GM12878 (cell line): ENCODE measurements at regions of chr2 and their contacts with region 1.

Region 1: DNA sequence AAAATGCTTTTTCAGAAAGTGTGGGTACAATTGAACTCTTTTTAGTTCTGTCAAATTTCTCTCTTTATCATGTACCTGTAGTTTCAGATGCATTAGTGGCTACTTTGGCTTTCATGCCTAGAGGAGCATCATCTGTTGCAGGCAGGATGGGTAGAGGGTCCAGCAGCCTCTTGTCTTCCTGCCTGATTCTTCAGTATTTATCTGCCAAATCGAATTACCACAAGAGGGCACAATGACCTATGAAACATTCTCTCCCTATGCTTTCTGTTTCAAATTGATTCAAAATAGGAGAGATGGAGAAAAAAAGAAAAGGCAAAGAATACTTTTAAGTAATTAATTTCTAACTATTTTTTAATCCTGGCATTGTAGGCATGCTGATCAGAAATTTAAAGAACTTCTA is 477.2 kb downstream of the TRIB2 start:
- DNase-seq: peak; percentile 31
- ATAC-seq: peak; percentile 92
- H3K4me3 ChIP-seq: no peak overlapping the region
- H3K27ac ChIP-seq: no peak overlapping the region
- H3K4me1 ChIP-seq: no peaks in the 10 kb centered on the region
- H3K27me3 ChIP-seq: no peaks in the 10 kb centered on the region
- CTCF ChIP-seq: peak; percentile 42 to 68 (median 56); a peak in 5 of 6 replicates
- EP300 ChIP-seq: no peak
- POLR2A ChIP-seq: no peak
- RAD21 ChIP-seq: peak; percentile 83

Region 2: GRCh38 chr2:13056259-13056843 is 137.5 kb before region 1 on chr2:
- CTCF ChIA-PET with region 1: interaction called, 3 read pairs
- POLR2A ChIA-PET with region 1: no interaction called
- RAD21 ChIA-PET with region 1: no interaction called
- SMC1A ChIA-PET with region 1: no interaction called
- in situ Hi-C with region 1: no loop called
- intact Hi-C with region 1: loop called (anchors 5 kb)
- DNase-seq: no peak
- ATAC-seq: peak; percentile 41; the same call in 2 of the 3 replicates
- H3K4me3 ChIP-seq: no peak overlapping the region
- H3K27ac ChIP-seq: no peak overlapping the region
- H3K4me1 ChIP-seq: no peaks in the 10 kb centered on the region
- H3K27me3 ChIP-seq: no peaks in the 10 kb centered on the region
- CTCF ChIP-seq: peak; percentile 17 to 46 (median 25); a peak in 3 of 6 replicates
- EP300 ChIP-seq: no peak
- POLR2A ChIP-seq: no peak
- RAD21 ChIP-seq: 0 out of 2 replicates have a peak, but pooled peaks have one; percentile 19

Region 3: DNA sequence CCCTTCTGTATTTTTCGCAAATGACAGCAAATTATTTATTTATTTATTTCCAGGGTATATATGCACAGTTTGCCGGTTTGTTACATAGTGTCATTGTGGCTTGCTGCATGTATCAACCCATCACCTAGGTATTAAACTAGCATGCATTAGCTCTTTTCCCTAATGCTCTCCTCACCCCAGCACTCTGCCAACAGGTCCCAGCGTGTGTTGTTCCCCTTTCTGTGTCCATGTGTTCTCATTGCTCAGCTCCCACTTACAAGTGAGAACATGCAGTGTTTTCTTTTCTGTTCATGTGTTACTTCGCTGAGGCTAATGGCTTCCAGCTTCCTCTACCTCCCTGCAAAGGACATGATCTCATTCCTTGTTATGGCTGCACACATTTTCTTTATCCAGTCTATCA is 115.1 kb after region 1 on chr2:
- CTCF ChIA-PET with region 1: no interaction called
- POLR2A ChIA-PET with region 1: no interaction called
- RAD21 ChIA-PET with region 1: no interaction called
- SMC1A ChIA-PET with region 1: no interaction called
- in situ Hi-C with region 1: no loop called
- intact Hi-C with region 1: no loop called
- DNase-seq: no peak
- ATAC-seq: no peak
- H3K4me3 ChIP-seq: no peak overlapping the region
- H3K27ac ChIP-seq: no peak overlapping the region
- H3K4me1 ChIP-seq: no peaks in the 10 kb centered on the region
- H3K27me3 ChIP-seq: no peaks in the 10 kb centered on the region
- CTCF ChIP-seq: no peak
- EP300 ChIP-seq: no peak
- POLR2A ChIP-seq: no peak
- RAD21 ChIP-seq: no peak

Region 4: DNA sequence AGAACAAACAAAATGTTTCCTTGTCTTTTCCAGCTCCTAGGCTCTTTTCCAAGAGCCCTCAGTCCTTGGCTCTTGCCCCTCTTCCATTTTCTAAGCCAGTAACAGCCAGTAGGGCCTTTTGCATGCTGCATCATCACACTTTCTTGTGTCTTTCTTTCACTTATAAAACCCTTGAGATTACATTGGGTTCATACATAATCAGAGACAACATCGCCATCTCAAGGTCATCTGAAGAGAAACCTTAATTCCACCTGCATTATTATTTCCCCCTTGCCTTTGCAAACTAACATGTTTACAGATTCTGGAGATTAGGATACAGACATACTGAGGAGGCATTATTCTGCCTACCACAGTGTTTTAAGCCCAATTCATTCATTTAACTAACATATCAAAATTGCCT is 220.1 kb after region 1 on chr2:
- CTCF ChIA-PET with region 1: no interaction called
- POLR2A ChIA-PET with region 1: no interaction called
- RAD21 ChIA-PET with region 1: no interaction called
- SMC1A ChIA-PET with region 1: no interaction called
- in situ Hi-C with region 1: no loop called
- intact Hi-C with region 1: loop called (anchors 10 kb)
- DNase-seq: no peak
- ATAC-seq: no peak
- H3K4me3 ChIP-seq: no peak overlapping the region
- H3K27ac ChIP-seq: no peak overlapping the region
- H3K4me1 ChIP-seq: no peaks in the 10 kb centered on the region
- H3K27me3 ChIP-seq: no peaks in the 10 kb centered on the region
- CTCF ChIP-seq: no peak
- EP300 ChIP-seq: no peak
- POLR2A ChIP-seq: no peak
- RAD21 ChIP-seq: peak; percentile 34; the same call in 1 of the 2 replicates

Region 5: GRCh38 chr2:13884291-13884976 is 690.5 kb after region 1 on chr2:
- CTCF ChIA-PET with region 1: interaction called, 3 read pairs
- POLR2A ChIA-PET with region 1: no interaction called
- RAD21 ChIA-PET with region 1: interaction called, 10 read pairs
- SMC1A ChIA-PET with region 1: interaction called, 10 read pairs
- in situ Hi-C with region 1: no loop called
- intact Hi-C with region 1: no loop called
- DNase-seq: no peak
- ATAC-seq: no peak
- H3K4me3 ChIP-seq: no peak overlapping the region
- H3K27ac ChIP-seq: no peak overlapping the region
- H3K4me1 ChIP-seq: no peaks in the 10 kb centered on the region
- H3K27me3 ChIP-seq: no peaks in the 10 kb centered on the region
- CTCF ChIP-seq: peak in 1 of 3 experiments; percentile 24; a peak in 1 of 6 replicates
- EP300 ChIP-seq: no peak
- POLR2A ChIP-seq: no peak
- RAD21 ChIP-seq: peak; percentile 54

Region 6: DNA sequence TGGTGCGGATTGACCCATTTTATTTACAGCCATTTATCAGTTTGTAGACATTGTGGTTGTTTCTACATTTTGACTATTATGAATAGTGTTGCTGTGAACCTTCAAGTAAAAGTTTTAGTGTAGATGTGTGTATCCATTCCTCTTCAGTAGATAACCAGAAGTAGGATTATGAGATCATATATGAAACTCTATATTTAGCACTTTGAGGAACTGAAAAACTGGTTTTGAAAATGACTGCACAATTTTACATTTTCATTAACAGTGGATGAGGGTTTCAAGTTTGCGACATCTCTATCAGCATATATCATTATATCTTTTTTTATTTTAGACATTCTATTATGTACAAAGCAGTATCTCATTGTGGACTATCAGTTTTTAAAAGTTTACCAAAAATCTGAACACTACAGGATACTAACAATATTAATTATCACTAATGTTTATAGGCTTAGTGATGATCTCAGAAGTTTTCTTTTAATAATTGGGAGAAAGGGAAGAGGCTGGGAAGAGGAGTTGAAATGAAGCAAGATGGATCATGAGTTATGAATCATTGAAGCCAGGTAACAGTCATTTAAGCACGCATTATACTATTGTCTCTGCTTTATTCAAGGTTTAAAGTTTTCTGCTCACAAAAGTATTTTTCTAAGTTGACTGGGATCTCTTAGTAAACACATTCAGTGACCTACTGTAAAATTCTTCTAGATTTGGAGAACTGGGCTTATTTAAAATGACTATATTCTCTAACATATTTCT is 1109.6 kb after region 1 on chr2:
- CTCF ChIA-PET with region 1: no interaction called
- POLR2A ChIA-PET with region 1: no interaction called
- RAD21 ChIA-PET with region 1: no interaction called
- SMC1A ChIA-PET with region 1: no interaction called
- in situ Hi-C with region 1: no loop called
- intact Hi-C with region 1: loop called (anchors 10 kb)
- DNase-seq: peak; percentile 45
- ATAC-seq: peak; percentile 91
- H3K4me3 ChIP-seq: no peak overlapping the region
- H3K27ac ChIP-seq: peak overlapping the region; percentile 65
- H3K4me1 ChIP-seq: peaks cover 10% of the 10 kb centered on the region; the same call in 1 of the 2 replicates
- H3K27me3 ChIP-seq: no peaks in the 10 kb centered on the region
- CTCF ChIP-seq: no peak
- EP300 ChIP-seq: peak; percentile 88 to 97
- POLR2A ChIP-seq: no peak
- RAD21 ChIP-seq: no peak